ENCODE measurements at regions of chr11 and their contacts with region 1.

Region 1: GRCh38 chr11:60615497-60615896 is 83.9 kb upstream of the MS4A8 start:
- DNase-seq: no peak
- H3K4me3 Mint-ChIP-seq: no peak overlapping the region
- H3K27ac Mint-ChIP-seq: no peak overlapping the region
- H3K4me1 Mint-ChIP-seq: no peaks in the 10 kb centered on the region
- H3K27me3 Mint-ChIP-seq: peaks cover 29% of the 10 kb centered on the region
- CTCF ChIP-seq: no peak

Region 2: DNA sequence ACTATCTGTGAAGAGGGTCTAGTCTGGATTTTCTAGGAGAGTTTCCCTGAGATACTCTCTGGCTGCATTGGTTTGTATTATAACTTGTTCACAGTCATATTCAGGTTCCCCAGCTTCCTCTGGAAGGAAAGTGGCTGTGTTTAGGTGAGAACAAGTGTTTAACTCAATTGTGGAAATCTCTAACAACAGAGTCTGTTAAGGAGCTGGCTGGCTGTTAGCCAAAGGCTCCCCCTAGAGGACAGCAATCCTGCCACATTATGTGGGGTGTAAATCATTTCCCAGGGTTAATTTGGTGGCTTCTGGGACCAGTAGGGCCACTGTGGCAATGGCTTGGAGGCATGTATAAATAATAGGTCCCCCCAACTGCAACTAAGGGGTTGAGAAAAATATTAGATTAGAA is 270.0 kb before region 1 on chr11:
- CTCF ChIA-PET with region 1: interaction called, 6 read pairs
- POLR2A ChIA-PET with region 1: no interaction called
- intact Hi-C with region 1: loop called (anchors 2 kb)
- DNase-seq: peak; percentile 42
- H3K4me3 Mint-ChIP-seq: no peak overlapping the region
- H3K27ac Mint-ChIP-seq: no peak overlapping the region
- H3K4me1 Mint-ChIP-seq: no peaks in the 10 kb centered on the region
- H3K27me3 Mint-ChIP-seq: peaks cover 72% of the 10 kb centered on the region
- CTCF ChIP-seq: peak; percentile 24

Region 3: GRCh38 chr11:60700689-60701480 is 85.4 kb after region 1 on chr11:
- CTCF ChIA-PET with region 1: no interaction called
- POLR2A ChIA-PET with region 1: no interaction called
- intact Hi-C with region 1: no loop called
- DNase-seq: peak; percentile 29
- H3K4me3 Mint-ChIP-seq: no peak overlapping the region
- H3K27ac Mint-ChIP-seq: no peak overlapping the region
- H3K4me1 Mint-ChIP-seq: no peaks in the 10 kb centered on the region
- H3K27me3 Mint-ChIP-seq: peaks cover 22% of the 10 kb centered on the region
- CTCF ChIP-seq: no peak

Measured in MCF 10A (cell line).